ENCODE measurements at regions of chr2 and their contacts with region 1.

Region 1: GRCh38 chr2:42828487-42829425 is 36.4 kb upstream of the HAAO start:
- DNase-seq: peak; percentile 92
- H3K4me3 ChIP-seq: no peak overlapping the region; a peak in 1 of 4 replicates
- H3K27ac ChIP-seq: no peak overlapping the region
- H3K4me1 ChIP-seq: peaks cover 0 to 12% of the 10 kb centered on the region in 2 experiments; a peak in 1 of 4 replicates
- H3K27me3 ChIP-seq: no peaks in the 10 kb centered on the region
- CTCF ChIP-seq: peak; percentile 99
- EP300 ChIP-seq: no peak
- RAD21 ChIP-seq: peak; percentile 96

Region 2: DNA sequence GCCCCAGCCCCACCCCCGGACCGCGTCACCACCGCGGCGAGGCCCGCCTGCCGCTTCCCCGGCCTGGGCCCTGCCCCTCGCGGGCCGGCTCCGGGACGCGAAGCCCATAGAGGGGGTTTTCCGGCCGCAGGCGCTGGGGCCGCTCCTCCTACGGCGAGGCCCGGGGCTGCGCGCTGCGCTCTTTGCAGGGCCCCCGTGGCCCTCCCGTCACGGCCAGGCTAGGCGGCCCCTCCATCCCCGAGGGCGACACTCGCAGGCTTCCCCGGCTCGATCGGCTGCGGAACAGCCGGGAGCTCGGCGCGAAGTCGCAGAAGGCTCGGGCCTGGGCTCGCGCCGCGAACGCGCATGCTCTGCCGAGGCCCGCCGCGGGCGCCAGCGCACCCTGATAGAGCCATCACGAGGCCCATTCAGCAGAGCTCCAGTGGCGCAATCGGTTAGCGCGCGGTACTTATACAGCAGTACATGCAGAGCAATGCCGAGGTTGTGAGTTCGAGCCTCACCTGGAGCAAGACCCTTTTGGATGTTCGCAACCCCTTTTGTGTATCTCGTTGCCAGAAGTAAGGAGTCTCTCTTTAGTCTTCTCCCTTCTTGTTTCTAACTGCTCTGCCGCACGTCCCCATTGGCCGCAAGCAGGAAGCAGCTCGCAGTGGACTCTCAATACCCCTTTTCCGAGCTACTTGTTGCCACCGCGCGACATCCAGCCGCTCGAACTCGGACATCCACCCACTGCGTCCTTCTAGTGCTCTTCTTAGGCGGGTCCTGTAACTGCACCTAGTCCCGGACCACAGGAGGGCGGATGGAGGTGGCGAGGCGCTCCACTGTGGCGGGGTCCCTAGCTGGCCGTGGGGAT is 18.4 kb before region 1 on chr2:
- CTCF ChIA-PET with region 1: interaction called, 103 read pairs
- POLR2A ChIA-PET with region 1: no interaction called
- DNase-seq: peak; percentile 97
- H3K4me3 ChIP-seq: peak overlapping the region; percentile 67 to 75
- H3K27ac ChIP-seq: peak overlapping the region; percentile 95 to 99
- H3K4me1 ChIP-seq: peaks cover 0 to 17% of the 10 kb centered on the region in 2 experiments; a peak in 1 of 4 replicates
- H3K27me3 ChIP-seq: no peaks in the 10 kb centered on the region
- CTCF ChIP-seq: no peak
- EP300 ChIP-seq: peak in 1 of 2 experiments; percentile 76; a peak in 1 of 4 replicates
- RAD21 ChIP-seq: no peak

Region 3: GRCh38 chr2:42878581-42878980 is 49.8 kb after region 1 on chr2:
- CTCF ChIA-PET with region 1: interaction called, 10 read pairs
- POLR2A ChIA-PET with region 1: interaction called, 5 read pairs
- DNase-seq: no peak
- H3K4me3 ChIP-seq: no peak overlapping the region
- H3K27ac ChIP-seq: no peak overlapping the region
- H3K4me1 ChIP-seq: peaks cover 0 to 19% of the 10 kb centered on the region in 2 experiments; a peak in 2 of 4 replicates
- H3K27me3 ChIP-seq: no peaks in the 10 kb centered on the region
- CTCF ChIP-seq: no peak
- EP300 ChIP-seq: no peak
- RAD21 ChIP-seq: no peak

Region 4: DNA sequence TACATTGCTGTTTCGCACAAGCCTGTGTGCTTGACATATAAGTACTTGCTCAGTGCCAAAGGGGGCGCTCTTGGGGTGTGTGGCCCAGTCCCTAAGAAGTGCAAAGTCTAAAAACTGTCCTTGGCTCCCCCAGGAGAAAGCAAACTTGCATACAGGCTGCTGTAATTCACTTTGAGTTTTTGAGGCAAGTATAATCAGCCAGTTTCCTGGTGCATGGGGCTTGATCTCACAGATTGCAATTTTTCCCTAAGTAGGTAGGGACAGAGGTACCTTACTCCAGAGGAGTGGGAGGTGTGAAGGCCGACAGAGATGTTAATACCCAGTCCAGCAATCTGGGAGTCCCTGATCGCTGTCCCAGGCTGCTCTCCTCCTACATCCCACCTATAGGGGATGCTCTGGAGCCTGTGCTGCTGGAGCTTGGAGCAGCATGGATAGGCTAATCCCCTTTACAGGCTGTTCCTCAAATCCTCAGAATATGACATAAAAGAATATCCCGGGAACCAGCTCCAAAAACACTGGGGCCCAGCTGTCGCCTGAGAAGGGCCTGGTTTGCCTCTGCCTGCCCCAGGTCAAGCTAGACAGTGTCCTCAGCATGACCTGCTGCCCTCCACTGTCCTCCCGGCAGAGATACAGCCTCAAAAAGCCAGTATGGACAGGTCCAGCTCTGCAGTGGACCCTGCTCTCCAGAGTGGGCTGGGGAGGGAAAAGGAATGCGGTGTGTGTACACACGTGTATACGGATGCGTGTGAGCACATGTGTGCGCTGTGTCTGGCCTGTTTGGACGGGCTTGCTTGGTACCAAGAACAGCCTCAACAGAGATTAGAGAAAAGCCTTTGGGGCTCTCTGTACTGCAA is 100.2 kb after region 1 on chr2:
- CTCF ChIA-PET with region 1: interaction called, 56 read pairs
- POLR2A ChIA-PET with region 1: no interaction called
- DNase-seq: peak; percentile 76
- H3K4me3 ChIP-seq: no peak overlapping the region
- H3K27ac ChIP-seq: peak overlapping the region in 1 of 2 experiments; percentile 39; a peak in 1 of 4 replicates
- H3K4me1 ChIP-seq: peaks cover 25 to 70% of the 10 kb centered on the region in 2 experiments
- H3K27me3 ChIP-seq: no peaks in the 10 kb centered on the region
- CTCF ChIP-seq: peak; percentile 53
- EP300 ChIP-seq: no peak
- RAD21 ChIP-seq: peak; percentile 46

Region 5: DNA sequence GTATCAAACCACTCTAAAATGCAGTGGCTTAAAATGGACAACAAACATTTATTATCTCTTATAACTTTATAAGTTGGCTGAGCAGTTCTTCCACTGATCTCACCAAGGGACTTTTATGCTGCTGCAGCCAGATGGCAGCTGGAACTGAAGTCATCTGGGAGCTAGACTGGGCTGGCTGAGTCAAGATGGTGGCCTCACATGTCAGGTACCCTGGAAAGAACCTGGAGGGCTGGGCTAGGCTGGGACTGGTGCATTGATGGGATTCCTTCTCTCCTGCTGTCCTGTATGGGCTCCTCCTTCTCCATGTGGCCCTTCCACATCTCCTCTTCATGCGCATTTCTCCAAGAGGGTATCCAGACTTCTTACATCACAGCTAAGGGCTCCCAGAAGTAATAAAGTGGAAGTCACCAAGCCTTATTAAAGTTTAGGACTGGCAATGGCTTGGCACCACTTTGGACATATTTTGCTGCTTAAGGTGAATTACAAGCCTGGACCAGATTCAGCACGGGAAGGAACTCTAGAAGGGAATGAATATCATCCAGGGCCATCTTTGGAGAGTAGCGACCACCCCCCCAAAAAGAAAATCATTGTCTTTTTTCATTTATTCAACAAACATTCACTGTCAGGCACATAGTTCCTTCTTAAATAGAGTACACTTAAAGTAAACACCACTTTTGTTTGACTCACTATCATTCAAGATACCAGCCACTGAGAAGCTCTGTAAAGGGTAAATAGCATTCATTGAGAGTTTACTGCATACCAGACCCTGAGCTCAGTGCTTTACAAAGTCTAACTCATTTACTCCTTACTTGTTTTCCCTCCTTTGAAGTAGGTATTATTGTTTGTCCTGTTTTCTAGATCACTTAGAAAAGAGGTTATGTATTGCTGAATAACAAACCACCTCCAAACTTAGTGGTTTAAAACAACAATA is 259.7 kb after region 1 on chr2:
- CTCF ChIA-PET with region 1: no interaction called
- POLR2A ChIA-PET with region 1: no interaction called
- DNase-seq: no peak
- H3K4me3 ChIP-seq: no peak overlapping the region
- H3K27ac ChIP-seq: peak overlapping the region in 1 of 2 experiments; percentile 34; a peak in 1 of 4 replicates
- H3K4me1 ChIP-seq: peaks cover 30 to 38% of the 10 kb centered on the region in 2 experiments
- H3K27me3 ChIP-seq: no peaks in the 10 kb centered on the region
- CTCF ChIP-seq: no peak
- EP300 ChIP-seq: no peak
- RAD21 ChIP-seq: no peak

Region 6: DNA sequence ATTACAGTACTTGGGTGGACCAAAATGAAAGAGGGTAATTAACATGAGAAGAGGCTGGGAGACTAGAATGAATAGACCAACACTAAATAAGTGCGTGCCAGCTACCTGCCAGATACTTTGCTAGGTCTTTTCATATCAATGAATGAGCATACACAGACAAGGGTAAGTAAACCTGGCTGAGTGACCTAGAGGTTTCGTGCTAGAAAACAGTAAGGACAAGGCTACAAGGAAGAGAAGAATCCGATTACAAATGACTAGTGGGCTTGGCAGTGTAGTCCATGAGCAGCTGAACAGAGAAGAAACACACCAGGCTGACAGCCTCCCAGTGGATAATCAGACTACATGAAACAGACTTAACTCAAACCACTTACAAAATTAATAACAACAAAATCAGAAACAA is 702.5 kb after region 1 on chr2:
- CTCF ChIA-PET with region 1: interaction called, 80 read pairs
- POLR2A ChIA-PET with region 1: no interaction called
- DNase-seq: no peak
- H3K4me3 ChIP-seq: no peak overlapping the region
- H3K27ac ChIP-seq: no peak overlapping the region
- H3K4me1 ChIP-seq: no peaks in the 10 kb centered on the region; a peak in 1 of 4 replicates
- H3K27me3 ChIP-seq: no peaks in the 10 kb centered on the region
- CTCF ChIP-seq: no peak
- EP300 ChIP-seq: no peak
- RAD21 ChIP-seq: no peak

Region 7: DNA sequence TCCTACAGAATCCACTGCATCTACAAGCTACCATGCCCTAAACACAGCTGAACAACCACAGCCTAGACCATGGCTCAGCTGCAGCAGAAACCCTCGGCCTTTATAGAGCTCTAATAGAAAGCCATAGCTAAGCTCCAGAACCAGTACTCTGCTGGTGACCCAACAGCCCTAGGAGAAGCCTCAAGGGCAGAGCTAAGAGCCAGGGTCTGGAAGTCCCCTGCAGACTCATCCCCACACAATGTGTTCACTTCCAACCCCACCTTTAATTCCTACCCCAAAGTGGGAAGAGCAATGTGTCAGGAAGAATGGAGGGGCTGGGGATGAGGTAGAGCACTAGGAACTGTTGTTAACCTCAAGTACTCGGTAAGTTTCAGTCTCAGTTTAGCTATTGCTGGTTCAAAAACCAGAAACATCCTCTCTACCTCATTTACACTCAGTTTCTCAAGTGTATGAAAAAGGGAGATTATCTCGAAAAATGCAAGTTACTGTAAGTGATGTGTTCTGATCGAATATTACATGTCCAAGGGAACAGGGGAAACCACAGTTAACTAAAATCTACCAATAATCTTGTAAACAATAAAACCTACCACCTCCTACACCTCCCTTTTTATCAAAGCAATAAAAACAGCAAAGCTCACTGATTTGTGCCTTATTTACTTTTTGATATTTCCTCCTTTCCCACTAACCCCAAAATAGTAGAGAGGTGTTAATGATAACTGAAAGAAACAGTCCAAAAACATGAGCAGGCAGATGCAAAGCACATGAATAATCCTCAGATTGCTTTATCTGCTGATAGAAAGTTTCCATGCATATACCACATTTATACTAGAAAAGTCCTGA is 730.9 kb after region 1 on chr2:
- CTCF ChIA-PET with region 1: interaction called, 16 read pairs
- POLR2A ChIA-PET with region 1: no interaction called
- DNase-seq: no peak
- H3K4me3 ChIP-seq: no peak overlapping the region
- H3K27ac ChIP-seq: no peak overlapping the region
- H3K4me1 ChIP-seq: no peaks in the 10 kb centered on the region
- H3K27me3 ChIP-seq: no peaks in the 10 kb centered on the region
- CTCF ChIP-seq: no peak
- EP300 ChIP-seq: no peak
- RAD21 ChIP-seq: no peak

Region 8: GRCh38 chr2:43595603-43596412 is 767.1 kb after region 1 on chr2 and contains the start of gene THADA:
- CTCF ChIA-PET with region 1: interaction called, 14 read pairs
- POLR2A ChIA-PET with region 1: no interaction called
- DNase-seq: peak; percentile 97
- H3K4me3 ChIP-seq: peak within 1 kb of the TSS; percentile 77 to 88
- H3K27ac ChIP-seq: peak within 1 kb of the TSS; percentile 89 to 98
- H3K4me1 ChIP-seq: peaks cover 7 to 11% of the 10 kb centered on the region in 2 experiments; a peak in 3 of 4 replicates
- H3K27me3 ChIP-seq: no peaks in the 10 kb centered on the region
- CTCF ChIP-seq: no peak
- EP300 ChIP-seq: no peak; a peak in 1 of 4 replicates
- RAD21 ChIP-seq: no peak
- polyA plus RNA-seq, gene THADA: 17.1 and 25.6 TPM in 2 replicates